Tibial artery (tissue), 4 donors: ENCODE measurements at regions of chr9 and their contacts with region 1.

Region 1: DNA sequence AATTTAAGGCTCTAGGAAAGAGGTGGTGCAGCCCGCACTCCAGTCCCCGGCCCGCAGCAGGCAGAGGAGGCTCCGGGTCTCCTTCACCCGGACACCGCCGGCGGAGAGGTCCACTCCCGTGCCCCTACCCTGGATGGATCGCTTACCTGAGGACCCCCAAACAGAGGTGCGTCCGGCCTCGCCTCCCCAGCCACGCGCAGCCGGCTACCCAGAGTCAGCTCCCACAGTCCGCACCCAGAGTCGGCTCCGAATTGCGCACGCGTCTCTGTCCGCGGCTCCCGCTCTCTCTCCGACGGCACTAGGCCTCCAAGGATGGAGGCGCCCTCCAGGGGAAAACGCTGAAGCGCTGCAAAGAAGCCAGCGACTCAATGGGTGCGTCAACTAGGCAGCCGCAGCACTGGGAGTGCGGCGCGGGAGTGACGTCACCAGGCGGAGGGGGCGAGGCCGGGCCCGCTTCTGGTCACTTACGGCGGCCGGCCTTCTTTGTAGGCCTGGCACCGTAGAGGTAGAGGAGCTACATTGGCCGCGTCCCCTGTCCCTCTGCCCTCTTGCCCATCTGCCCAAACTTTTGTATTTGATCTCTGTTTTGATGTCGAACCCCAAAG is at the start of gene ELP1:
- DNase-seq: peak; percentile 90 to 94
- H3K4me3 ChIP-seq: peak within 1 kb of the TSS; percentile 71 to 76
- H3K27ac ChIP-seq: peak within 1 kb of the TSS; percentile 83 to 86
- H3K4me1 ChIP-seq: peaks cover 0 to 25% (median 18%) of the 10 kb centered on the region in 4 donors
- H3K27me3 ChIP-seq: no peaks in the 10 kb centered on the region
- CTCF ChIP-seq: no peak

Region 2: GRCh38 chr9:108850293-108850897 is 83.4 kb before region 1 on chr9:
- intact Hi-C with region 1: no loop called
- DNase-seq: no peak
- H3K4me3 ChIP-seq: no peak overlapping the region
- H3K27ac ChIP-seq: no peak overlapping the region
- H3K4me1 ChIP-seq: no peaks in the 10 kb centered on the region
- H3K27me3 ChIP-seq: no peaks in the 10 kb centered on the region
- CTCF ChIP-seq: no peak

Region 3: GRCh38 chr9:109012876-109013678 is 79.3 kb after region 1 on chr9 and contains the start of gene CTNNAL1:
- intact Hi-C with region 1: loop called (anchors 10 kb)
- DNase-seq: peak; percentile 95 to 98
- H3K4me3 ChIP-seq: peak within 1 kb of the TSS; percentile 72 to 77
- H3K27ac ChIP-seq: peak within 1 kb of the TSS; percentile 91 to 97
- H3K4me1 ChIP-seq: peaks cover 0 to 38% (median 28%) of the 10 kb centered on the region in 4 donors
- H3K27me3 ChIP-seq: no peaks in the 10 kb centered on the region
- CTCF ChIP-seq: no peak